ENCODE measurements at regions of chr18 and their contacts with region 1.

Region 1: GRCh38 chr18:13318731-13319501 is 100.4 kb downstream of the LDLRAD4 start:
- DNase-seq: no peak
- H3K4me3 ChIP-seq: no peak overlapping the region
- H3K27ac ChIP-seq: no peak overlapping the region
- H3K4me1 ChIP-seq: no peaks in the 10 kb centered on the region
- H3K27me3 ChIP-seq: no peaks in the 10 kb centered on the region
- CTCF ChIP-seq: no peak

Region 2: DNA sequence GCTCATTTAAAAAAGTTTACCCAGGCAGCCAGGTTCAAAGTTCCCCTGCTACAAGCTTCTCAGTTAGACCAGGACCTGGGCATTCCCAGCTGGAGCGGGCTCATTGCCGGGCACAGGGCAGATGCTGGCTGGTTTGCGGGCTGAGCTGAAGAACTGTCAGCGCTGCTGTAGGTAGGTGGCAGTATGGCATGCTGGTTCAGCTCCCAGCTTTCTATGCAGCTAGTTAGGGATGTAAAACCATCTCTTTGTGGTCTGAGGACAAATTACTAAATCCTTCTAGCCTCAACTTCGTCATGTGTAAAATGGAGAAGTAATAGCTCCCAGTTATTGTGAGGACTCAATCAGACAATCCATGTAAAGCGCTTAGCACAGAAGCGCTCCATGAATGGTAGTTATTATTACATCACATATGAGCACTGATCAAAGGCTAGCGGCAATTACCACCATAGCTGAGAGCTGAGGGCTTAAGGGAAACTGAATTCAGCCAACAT is 102.8 kb before region 1 on chr18:
- CTCF ChIA-PET with region 1: no interaction called
- dilution Hi-C with region 1: no loop called
- in situ Hi-C with region 1: no loop called
- intact Hi-C with region 1: no loop called
- DNase-seq: peak; percentile 42
- H3K4me3 ChIP-seq: no peak overlapping the region
- H3K27ac ChIP-seq: no peak overlapping the region
- H3K4me1 ChIP-seq: peaks cover 6% of the 10 kb centered on the region
- H3K27me3 ChIP-seq: peaks cover 24% of the 10 kb centered on the region
- CTCF ChIP-seq: peak; percentile 35 to 73

Region 3: DNA sequence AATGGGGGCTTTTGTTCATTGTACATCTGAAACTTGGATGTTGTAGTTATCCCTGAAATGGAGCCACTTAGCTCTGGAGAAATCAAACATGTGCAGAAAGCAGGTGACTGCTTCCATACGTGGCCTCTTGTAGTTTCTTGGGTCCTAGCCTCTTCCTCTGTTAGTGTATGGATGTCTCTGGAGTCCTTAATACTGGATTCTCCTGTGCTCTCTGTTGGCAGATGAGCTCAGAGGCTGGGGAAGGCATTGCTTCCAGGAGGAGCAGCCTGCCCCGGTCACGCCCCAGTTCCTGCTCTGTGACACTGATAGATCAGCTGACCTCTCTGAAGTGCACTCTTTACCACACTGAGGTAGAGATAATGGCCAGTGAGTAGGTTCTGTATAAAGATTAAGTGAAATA is 75.9 kb after region 1 on chr18:
- CTCF ChIA-PET with region 1: no interaction called
- dilution Hi-C with region 1: loop called (anchors 5 kb)
- in situ Hi-C with region 1: no loop called
- intact Hi-C with region 1: no loop called
- DNase-seq: no peak
- H3K4me3 ChIP-seq: no peak overlapping the region
- H3K27ac ChIP-seq: no peak overlapping the region
- H3K4me1 ChIP-seq: no peaks in the 10 kb centered on the region
- H3K27me3 ChIP-seq: no peaks in the 10 kb centered on the region
- CTCF ChIP-seq: no peak

Region 4: DNA sequence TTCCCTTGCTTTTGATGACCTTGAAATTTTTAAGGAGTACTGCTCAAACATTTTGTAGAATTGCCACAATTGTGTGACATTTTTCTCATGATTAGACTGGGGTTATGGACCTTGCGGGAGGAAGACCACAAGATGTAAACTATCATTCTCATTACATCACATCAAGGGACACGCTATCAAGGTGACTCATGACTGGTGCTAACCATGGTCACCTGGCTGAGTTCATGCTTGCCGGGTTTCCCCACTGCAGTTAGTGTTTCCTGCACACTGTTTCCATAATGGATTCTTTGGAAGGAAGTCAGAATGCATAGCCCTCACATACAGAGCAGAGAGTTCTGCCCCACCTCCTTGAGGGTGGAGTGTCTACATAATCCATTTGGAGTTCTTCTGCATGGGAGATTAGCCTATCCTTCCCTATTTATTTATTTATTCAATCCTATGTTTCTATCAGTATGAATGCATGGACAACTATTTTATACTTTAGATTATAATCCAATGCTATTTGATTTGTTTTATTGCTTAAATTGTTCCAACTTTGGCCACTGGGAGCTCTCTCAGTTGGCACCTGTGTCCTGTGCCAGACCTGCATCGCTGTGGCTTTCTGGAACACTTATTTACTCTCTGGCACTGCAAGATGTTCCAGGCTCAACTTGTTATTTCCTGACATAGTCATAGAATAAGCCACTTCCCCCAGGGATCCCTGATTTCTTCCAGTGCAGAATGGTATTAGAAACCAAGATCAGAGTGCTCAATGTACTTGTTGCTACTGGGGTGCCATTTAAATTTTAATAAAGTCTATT is 590.4 kb after region 1 on chr18:
- CTCF ChIA-PET with region 1: no interaction called
- dilution Hi-C with region 1: no loop called
- in situ Hi-C with region 1: no loop called
- intact Hi-C with region 1: no loop called
- DNase-seq: no peak
- H3K4me3 ChIP-seq: no peak overlapping the region
- H3K27ac ChIP-seq: no peak overlapping the region
- H3K4me1 ChIP-seq: no peaks in the 10 kb centered on the region
- H3K27me3 ChIP-seq: no peaks in the 10 kb centered on the region
- CTCF ChIP-seq: no peak

Measured in mammary epithelial cell (primary cell).